IMR-90 (cell line): ENCODE measurements at regions of chr9 and their contacts with region 1.

Region 1: DNA sequence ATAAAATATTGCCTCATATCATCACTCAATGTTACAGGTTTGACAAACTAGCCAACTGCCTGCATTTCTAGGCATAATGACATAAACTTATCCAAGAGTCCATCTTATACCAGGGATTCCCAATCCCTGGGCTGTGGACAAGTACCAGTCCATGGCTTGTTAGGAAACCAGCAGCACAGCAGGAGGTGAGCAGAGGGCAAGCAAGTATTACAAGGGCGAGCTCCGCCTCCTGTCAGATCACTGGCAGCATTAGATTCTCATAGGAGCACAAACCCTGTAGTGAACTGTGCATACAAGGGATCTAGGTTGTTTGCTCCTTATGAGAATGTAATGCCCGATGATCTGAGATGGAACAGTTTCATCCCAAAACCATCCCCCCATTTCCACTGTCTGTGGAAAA is 144.9 kb downstream of the PRKACG start:
- DNase-seq: no peak
- ATAC-seq: no peak
- H3K4me3 ChIP-seq: no peak overlapping the region
- H3K27ac ChIP-seq: no peak overlapping the region
- H3K4me1 ChIP-seq: no peaks in the 10 kb centered on the region
- H3K27me3 ChIP-seq: no peaks in the 10 kb centered on the region; the same call in 1 of the 2 replicates
- CTCF ChIP-seq: no peak
- POLR2A ChIP-seq: no peak
- RAD21 ChIP-seq: no peak

Region 2: GRCh38 chr9:68584189-68585033 is 284.6 kb before region 1 on chr9:
- CTCF ChIA-PET with region 1: no interaction called
- POLR2A ChIA-PET with region 1: no interaction called
- dilution Hi-C with region 1: no loop called
- in situ Hi-C with region 1: no loop called
- intact Hi-C with region 1: no loop called
- DNase-seq: peak; percentile 84
- ATAC-seq: peak; percentile 100
- H3K4me3 ChIP-seq: no peak overlapping the region
- H3K27ac ChIP-seq: no peak overlapping the region
- H3K4me1 ChIP-seq: no peaks in the 10 kb centered on the region
- H3K27me3 ChIP-seq: peaks cover 1% of the 10 kb centered on the region; the same call in 1 of the 2 replicates
- CTCF ChIP-seq: peak; percentile 100
- POLR2A ChIP-seq: no peak
- RAD21 ChIP-seq: peak; percentile 84

Region 3: GRCh38 chr9:68678430-68678829 is 190.6 kb before region 1 on chr9:
- CTCF ChIA-PET with region 1: no interaction called
- POLR2A ChIA-PET with region 1: no interaction called
- dilution Hi-C with region 1: no loop called
- in situ Hi-C with region 1: no loop called
- intact Hi-C with region 1: loop called (anchors 10 kb)
- DNase-seq: peak; percentile 2
- ATAC-seq: peak; percentile 46; the same call in 1 of the 2 replicates
- H3K4me3 ChIP-seq: no peak overlapping the region
- H3K27ac ChIP-seq: no peak overlapping the region
- H3K4me1 ChIP-seq: no peaks in the 10 kb centered on the region
- H3K27me3 ChIP-seq: no peaks in the 10 kb centered on the region; the same call in 1 of the 2 replicates
- CTCF ChIP-seq: no peak
- POLR2A ChIP-seq: no peak
- RAD21 ChIP-seq: no peak

Region 4: GRCh38 chr9:68895741-68896478 is 26.9 kb after region 1 on chr9:
- CTCF ChIA-PET with region 1: interaction called, 3 read pairs
- POLR2A ChIA-PET with region 1: no interaction called
- dilution Hi-C with region 1: no loop called
- in situ Hi-C with region 1: no loop called
- intact Hi-C with region 1: loop called (anchors 2 kb)
- DNase-seq: no peak
- ATAC-seq: no peak
- H3K4me3 ChIP-seq: no peak overlapping the region
- H3K27ac ChIP-seq: no peak overlapping the region
- H3K4me1 ChIP-seq: no peaks in the 10 kb centered on the region
- H3K27me3 ChIP-seq: no peaks in the 10 kb centered on the region; the same call in none of the 2 replicates
- CTCF ChIP-seq: no peak
- POLR2A ChIP-seq: no peak
- RAD21 ChIP-seq: no peak